ENCODE measurements at regions of chr17 and their contacts with region 1.

Region 1: DNA sequence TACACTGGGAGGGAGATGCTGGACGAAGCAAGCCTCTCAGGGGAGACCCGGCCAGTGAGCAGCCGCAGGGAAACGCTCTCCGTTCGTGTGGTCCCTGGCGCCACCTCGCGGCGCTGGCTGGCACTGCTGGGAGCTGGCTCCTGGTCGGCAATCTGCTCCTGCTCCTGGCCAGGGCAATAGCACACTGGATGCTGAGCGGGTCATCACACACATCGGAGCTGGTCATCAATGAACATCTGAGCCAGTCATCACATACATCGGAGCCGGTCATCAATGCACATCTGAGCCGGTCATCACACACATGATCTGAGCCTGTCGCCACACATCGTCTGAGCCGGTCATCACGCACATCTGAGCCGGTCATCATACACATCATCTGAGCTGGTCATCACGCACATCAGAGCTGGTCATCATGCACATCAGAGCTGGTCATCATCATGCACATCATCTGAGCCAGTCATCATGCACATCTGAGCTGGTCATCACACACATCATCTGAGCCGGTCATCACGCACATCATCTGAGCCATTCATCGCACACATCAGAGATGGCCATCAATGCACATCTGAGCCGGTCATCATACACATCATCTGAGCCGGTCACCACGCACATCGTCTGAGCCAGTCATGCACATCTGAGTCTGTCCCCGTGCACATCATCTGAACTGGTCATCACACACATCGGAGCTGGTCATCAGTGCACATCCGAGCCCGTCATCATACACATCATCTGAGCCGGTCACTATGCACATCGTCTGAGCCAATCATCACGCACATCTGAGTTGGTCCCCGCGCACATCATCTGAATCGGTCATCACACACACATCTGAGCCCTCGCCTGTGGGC is 217.3 kb downstream of the RBFOX3 start:
- DNase-seq: no peak
- H3K4me3 ChIP-seq: no peak overlapping the region
- H3K27me3 ChIP-seq: peaks cover 18% of the 10 kb centered on the region
- CTCF ChIP-seq: peak; percentile 98

Region 2: DNA sequence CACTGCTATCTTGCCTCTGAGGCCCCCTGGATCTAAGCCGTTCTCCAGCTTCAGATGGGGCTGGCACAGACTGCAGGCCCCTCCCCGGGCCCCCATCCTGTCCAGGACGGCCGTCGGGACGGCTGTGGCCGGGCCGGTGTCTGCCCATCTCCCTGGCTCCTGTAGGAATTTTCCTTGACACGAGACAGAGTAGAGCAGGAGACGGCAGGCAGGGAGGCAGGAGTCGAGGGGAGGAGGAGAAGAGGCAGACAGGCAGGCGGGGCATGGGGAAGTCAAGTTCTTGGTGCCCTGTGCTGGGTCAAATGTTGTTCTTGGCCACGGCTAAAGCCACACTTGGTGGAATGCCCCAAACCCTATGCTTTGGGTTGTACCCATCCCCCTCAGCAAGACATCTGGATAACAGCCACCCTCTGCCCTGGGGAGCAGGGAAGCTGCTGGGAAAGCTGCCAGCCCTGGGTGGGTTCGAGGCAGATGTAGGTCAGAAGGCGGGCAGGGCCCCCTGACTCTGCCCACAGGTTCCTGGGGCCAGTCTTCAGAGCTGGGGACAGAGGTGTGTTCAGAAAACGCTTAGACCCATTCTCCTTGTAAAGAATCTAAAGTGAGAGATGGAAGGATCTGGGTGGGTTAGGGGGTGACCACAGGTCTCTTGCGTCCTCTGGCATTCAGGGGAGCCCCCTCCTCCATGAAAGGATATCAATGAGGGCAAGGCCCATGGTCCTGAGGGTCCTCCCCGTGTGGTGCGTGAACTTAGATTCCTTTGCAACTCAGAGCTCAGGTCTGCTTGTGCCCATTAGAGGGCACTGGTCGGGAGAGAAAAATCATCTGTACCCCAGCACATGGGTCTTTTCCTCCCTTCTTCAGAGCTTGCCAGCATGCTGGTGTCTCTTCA is 365.4 kb before region 1 on chr17:
- CTCF ChIA-PET with region 1: interaction called, 120 read pairs
- POLR2A ChIA-PET with region 1: no interaction called
- DNase-seq: no peak
- H3K4me3 ChIP-seq: no peak overlapping the region
- H3K27me3 ChIP-seq: no peaks in the 10 kb centered on the region
- CTCF ChIP-seq: peak; percentile 34; the same call in 1 of the 2 replicates

Region 3: DNA sequence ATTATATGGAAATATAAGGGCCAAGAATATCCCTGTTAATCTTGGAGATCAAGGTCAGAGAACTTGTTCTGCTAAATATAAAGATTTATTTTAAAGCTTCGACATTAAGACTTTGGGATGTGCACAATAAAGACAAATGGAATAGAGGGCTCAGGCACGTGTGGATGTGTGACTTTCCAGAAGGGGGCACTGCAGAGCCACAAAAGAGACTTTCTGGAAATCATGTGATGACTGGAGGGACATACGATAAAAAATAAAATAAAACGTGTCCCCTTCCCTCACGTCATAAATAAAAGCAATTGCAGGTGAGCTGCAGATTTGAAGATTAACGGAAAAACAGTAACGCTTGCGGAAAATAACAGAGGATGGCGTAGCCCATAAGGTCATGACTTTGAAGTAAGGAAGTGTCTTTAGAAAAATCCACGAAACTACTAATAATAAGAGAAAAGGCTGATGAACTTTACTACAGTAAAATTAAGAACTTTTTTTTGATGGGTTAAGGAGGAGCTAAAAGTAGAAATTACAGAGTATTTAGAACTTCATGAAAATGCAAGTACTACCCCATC is 328.4 kb before region 1 on chr17:
- CTCF ChIA-PET with region 1: interaction called, 31 read pairs
- POLR2A ChIA-PET with region 1: no interaction called
- DNase-seq: no peak
- H3K4me3 ChIP-seq: no peak overlapping the region
- H3K27me3 ChIP-seq: peaks cover 3% of the 10 kb centered on the region
- CTCF ChIP-seq: peak; percentile 51

Region 4: DNA sequence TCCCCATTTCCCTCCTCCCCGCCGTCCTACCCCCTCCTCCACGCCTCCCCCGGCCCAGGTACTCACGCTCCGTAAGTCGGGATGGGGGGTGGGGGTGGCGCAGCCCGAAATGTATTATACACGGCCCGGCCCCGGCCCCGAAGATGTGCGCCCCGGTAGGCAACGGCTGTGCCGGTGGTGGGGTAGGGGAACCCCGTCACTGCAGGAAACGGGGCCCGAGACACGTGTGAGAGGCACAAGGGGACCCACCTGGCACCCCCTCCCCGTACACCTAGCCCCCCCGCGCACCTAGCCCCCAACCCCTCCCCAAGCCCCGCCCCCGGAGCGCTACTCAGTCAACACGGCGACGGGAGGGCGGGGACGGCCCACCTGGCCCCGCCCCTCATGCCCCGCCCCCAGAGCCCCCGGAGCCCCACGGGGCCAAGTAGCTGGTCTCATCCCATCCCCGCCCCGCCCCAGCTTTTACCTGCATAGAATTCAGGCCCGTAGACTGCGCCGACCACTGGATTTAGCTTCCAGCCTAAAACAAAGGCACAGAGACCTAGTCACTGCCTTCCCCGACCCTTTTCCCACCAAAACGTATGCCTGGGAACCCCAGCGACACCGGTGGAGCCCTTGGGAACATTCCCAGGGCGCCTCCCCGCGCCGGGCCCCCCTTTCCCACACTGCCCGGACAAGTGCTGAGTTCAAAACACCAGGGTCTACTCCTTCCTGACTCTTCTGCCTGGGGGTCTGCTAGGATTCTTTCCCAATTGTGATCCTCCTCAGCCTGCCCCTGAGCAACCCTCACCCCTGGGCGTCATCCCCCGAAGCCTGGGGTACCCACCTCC is 296.1 kb before region 1 on chr17:
- CTCF ChIA-PET with region 1: interaction called, 23 read pairs
- POLR2A ChIA-PET with region 1: no interaction called
- DNase-seq: no peak
- H3K4me3 ChIP-seq: no peak overlapping the region
- H3K27me3 ChIP-seq: peaks cover 27% of the 10 kb centered on the region
- CTCF ChIP-seq: no peak

Region 5: GRCh38 chr17:79325709-79326430 is 67.7 kb before region 1 on chr17:
- CTCF ChIA-PET with region 1: no interaction called
- POLR2A ChIA-PET with region 1: no interaction called
- DNase-seq: no peak
- H3K4me3 ChIP-seq: no peak overlapping the region
- H3K27me3 ChIP-seq: no peaks in the 10 kb centered on the region
- CTCF ChIP-seq: no peak

Region 6: GRCh38 chr17:79365836-79366770 is 27.5 kb before region 1 on chr17:
- CTCF ChIA-PET with region 1: interaction called, 10 read pairs
- POLR2A ChIA-PET with region 1: no interaction called
- DNase-seq: no peak
- H3K4me3 ChIP-seq: no peak overlapping the region
- H3K27me3 ChIP-seq: peaks cover 5% of the 10 kb centered on the region
- CTCF ChIP-seq: no peak